Cardiac septum (tissue), 1 donor: ENCODE measurements at regions of chr4 and their contacts with region 1.

Region 1: DNA sequence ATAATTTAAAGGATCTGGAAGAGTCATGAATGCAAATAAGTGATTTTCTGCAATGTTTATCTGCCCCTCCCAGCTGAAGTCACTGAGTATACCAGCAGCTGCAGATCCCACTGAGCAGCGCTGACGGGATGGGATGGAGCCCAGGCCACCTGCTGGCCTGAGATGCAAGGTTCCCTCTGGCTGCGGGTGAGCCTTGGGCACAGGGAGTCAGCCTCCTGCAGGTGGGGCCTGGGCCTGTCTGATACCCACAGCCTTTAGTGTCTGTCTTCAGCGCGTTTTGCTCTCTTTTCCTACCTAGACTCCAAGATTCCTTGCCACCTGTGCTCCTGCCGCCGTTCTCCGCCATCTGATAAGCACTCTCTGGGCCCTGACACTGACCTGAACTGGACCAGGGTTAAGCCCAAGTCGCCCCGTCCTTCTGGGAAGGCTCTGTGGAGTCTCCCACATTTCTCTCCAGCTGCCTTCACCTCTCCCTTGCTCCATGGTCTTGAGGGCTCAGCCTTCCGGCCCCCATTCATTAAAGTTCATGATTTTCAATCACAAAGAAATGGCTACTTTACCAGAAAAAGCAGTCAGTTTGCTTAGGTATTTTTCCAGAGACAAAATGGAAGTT is 223.1 kb upstream of the FAT1 start:
- DNase-seq: no peak

Region 2: GRCh38 chr4:186669159-186669731 is 277.5 kb before region 1 on chr4:
- intact Hi-C with region 1: no loop called
- DNase-seq: no peak

Region 3: DNA sequence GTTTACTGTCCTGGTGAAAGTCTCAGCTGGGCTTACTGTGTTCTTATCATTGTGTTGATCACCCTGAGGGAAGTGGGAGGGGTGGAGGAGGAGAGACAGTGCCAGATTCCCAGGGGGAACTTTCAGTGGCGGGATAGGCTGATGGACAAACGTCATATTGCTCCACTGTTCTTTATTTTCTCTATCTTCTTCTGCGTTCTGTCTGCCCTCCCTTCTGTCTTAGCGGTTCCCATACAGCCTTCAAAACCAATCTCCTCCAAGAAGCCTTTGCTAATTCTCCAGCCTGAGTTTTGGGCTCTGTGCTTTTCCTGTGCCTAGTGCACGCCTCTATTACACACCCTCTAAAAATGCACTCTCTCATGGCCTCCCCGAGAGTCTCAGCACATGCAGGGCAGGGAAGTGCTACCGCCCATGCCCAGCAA is 225.6 kb after region 1 on chr4:
- intact Hi-C with region 1: loop called (anchors 10 kb)
- DNase-seq: no peak

Region 4: GRCh38 chr4:187283201-187283955 is 336.6 kb after region 1 on chr4:
- intact Hi-C with region 1: loop called (anchors 10 kb)
- DNase-seq: no peak